PC-3 (cell line): ENCODE measurements at regions of chr7 and their contacts with region 1.

Region 1: GRCh38 chr7:88243345-88243909 is 23.6 kb upstream of the SRI start:
- DNase-seq: peak; percentile 82
- ATAC-seq: peak; percentile 97
- H3K4me3 ChIP-seq: no peak overlapping the region
- H3K27ac ChIP-seq: no peak overlapping the region
- H3K4me1 ChIP-seq: peaks cover 2% of the 10 kb centered on the region; the same call in 1 of the 2 replicates
- H3K27me3 ChIP-seq: no peaks in the 10 kb centered on the region
- CTCF ChIP-seq: peak; percentile 95

Region 2: DNA sequence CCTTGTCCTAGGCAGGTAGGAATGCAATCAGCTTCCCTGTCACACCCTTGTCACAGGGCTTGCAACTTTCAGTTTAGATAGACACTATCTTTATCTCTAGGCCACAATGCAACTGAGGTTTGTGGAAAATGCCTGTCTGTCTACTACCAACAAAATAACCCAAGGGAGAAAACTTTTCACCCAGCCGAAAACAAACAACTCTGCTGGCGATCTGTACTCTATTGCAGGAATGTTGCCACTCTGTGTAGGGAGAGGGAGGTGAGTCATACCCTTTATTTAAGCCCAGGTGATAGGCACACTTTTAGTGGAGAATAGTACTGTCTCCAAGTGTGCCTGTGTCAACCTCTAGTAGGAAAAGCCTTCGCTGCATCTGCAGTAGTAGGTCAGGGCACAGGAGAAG is 475.6 kb before region 1 on chr7:
- CTCF ChIA-PET with region 1: no interaction called
- POLR2A ChIA-PET with region 1: no interaction called
- intact Hi-C with region 1: no loop called
- DNase-seq: peak; percentile 14
- ATAC-seq: no peak
- H3K4me3 ChIP-seq: no peak overlapping the region
- H3K27ac ChIP-seq: no peak overlapping the region
- H3K4me1 ChIP-seq: no peaks in the 10 kb centered on the region
- H3K27me3 ChIP-seq: no peaks in the 10 kb centered on the region
- CTCF ChIP-seq: no peak

Region 3: DNA sequence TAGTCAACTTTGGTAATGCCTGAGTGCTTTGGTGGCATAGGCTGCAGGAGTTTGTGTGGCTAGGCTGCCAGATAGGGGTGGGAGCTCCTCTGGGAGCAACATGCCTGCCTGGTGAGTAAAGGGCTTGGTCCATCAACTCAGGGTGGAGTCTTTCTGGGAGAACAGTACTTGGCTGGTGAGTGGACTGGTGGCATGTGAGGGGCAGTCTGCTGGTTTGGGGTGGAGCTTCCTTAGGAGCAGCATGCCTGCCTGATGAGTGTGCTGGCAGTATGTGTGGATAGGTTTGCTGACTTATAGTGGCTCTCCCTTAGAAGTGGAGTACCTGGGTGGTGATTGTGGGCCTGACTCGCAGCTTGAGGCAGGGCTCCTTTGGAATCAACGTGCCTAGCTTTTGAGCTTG is 11.3 kb after region 1 on chr7:
- CTCF ChIA-PET with region 1: interaction called, 10 read pairs
- POLR2A ChIA-PET with region 1: no interaction called
- intact Hi-C with region 1: no loop called
- DNase-seq: peak; percentile 88
- ATAC-seq: peak; percentile 93
- H3K4me3 ChIP-seq: no peak overlapping the region
- H3K27ac ChIP-seq: peak overlapping the region; percentile 81
- H3K4me1 ChIP-seq: peaks cover 27% of the 10 kb centered on the region
- H3K27me3 ChIP-seq: no peaks in the 10 kb centered on the region
- CTCF ChIP-seq: no peak

Region 4: GRCh38 chr7:88306590-88307048 is 63.2 kb after region 1 on chr7 and contains the start of gene STEAP4:
- CTCF ChIA-PET with region 1: interaction called, 8 read pairs
- POLR2A ChIA-PET with region 1: no interaction called
- intact Hi-C with region 1: loop called (anchors 1 kb)
- DNase-seq: peak; percentile 87
- ATAC-seq: peak; percentile 78
- H3K4me3 ChIP-seq: peak within 1 kb of the TSS; percentile 83
- H3K27ac ChIP-seq: peak within 1 kb of the TSS; percentile 44
- H3K4me1 ChIP-seq: peaks cover 36% of the 10 kb centered on the region
- H3K27me3 ChIP-seq: no peaks in the 10 kb centered on the region
- CTCF ChIP-seq: no peak
- total RNA-seq, gene STEAP4: 1.2 and 1.7 TPM in 2 replicates

Region 5: DNA sequence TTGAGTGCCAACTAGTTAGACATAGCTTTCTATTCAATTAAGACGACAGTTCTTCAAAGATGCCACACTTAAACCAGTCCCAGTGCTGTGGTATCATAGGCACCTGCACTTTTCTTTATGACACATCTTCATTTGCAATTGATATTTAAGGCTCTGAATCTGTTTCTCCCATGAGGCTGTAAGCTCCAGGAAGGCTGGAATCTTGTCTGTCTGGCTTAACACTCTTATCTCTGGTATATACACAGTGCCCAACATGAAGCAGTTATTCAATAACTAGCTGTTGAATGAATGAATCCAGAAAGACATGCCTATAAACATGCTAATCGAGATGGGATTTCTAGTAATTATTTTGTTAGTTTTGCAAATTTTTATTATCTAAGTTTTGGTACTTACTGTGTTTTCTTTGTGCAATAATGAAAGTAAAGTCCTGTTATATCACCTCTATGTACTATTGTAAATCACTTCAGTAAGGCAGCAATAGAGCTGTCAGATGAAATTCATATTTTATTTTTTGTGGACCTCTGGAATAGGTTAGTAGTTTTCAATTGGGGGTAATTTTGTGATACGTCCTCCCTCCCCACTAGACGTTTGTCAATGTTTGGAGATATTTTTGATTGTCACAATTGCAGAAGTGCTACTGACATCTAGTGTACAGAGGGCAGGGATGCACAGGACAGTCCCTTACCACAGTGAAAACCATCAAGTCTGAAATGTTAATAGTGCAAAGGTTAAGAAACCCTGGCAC is 114.5 kb after region 1 on chr7:
- CTCF ChIA-PET with region 1: interaction called, 54 read pairs
- POLR2A ChIA-PET with region 1: interaction called, 6 read pairs
- intact Hi-C with region 1: loop called (anchors 1 kb)
- DNase-seq: peak; percentile 54
- ATAC-seq: peak; percentile 75
- H3K4me3 ChIP-seq: peak overlapping the region; percentile 46
- H3K27ac ChIP-seq: no peak overlapping the region
- H3K4me1 ChIP-seq: 0 out of 2 replicates have a peak, but pooled peaks cover 6% of the 10 kb centered on the region
- H3K27me3 ChIP-seq: no peaks in the 10 kb centered on the region
- CTCF ChIP-seq: peak; percentile 76

Region 6: DNA sequence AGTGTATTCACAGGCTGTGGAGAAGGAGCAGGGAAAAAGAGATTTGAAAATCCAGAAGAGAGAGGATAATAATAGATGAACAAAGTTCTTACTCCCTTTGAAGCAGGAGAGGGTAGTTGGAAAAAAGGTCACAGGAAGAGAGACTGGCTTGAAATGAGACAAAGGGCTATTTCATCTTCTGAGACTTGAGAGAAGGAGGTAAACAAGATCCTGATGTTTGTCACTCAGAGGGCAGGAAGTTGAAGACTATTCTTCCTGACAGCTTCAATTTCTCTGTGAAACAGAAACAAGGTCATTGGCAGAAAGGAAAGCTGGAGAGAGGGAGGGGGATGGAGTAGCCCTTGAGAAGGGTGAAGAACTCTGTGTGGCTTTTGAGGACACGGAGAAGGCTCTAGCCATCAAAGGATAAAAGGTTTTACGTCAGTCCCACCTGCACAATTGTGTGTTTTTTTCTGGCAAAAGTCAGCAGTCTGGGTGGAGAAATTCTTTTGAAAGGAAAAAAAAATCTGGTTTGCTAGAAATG is 279.4 kb after region 1 on chr7:
- CTCF ChIA-PET with region 1: no interaction called
- POLR2A ChIA-PET with region 1: no interaction called
- intact Hi-C with region 1: no loop called
- DNase-seq: no peak
- ATAC-seq: no peak
- H3K4me3 ChIP-seq: no peak overlapping the region
- H3K27ac ChIP-seq: no peak overlapping the region
- H3K4me1 ChIP-seq: no peaks in the 10 kb centered on the region
- H3K27me3 ChIP-seq: no peaks in the 10 kb centered on the region
- CTCF ChIP-seq: no peak

Region 7: GRCh38 chr7:88758381-88759229 is 515.2 kb after region 1 on chr7:
- CTCF ChIA-PET with region 1: no interaction called
- POLR2A ChIA-PET with region 1: no interaction called
- intact Hi-C with region 1: loop called (anchors 10 kb)
- DNase-seq: peak; percentile 6
- ATAC-seq: peak; percentile 65
- H3K4me3 ChIP-seq: peak overlapping the region; percentile 13; the same call in 1 of the 2 replicates
- H3K27ac ChIP-seq: no peak overlapping the region
- H3K4me1 ChIP-seq: no peaks in the 10 kb centered on the region
- H3K27me3 ChIP-seq: peaks cover 42% of the 10 kb centered on the region
- CTCF ChIP-seq: no peak